Heart right ventricle (tissue), 16 donors: ENCODE measurements at regions of chr22 and their contacts with region 1.

Region 1: GRCh38 chr22:33920927-33921524 is 750 bp upstream of the LARGE1 start:
- DNase-seq: peak; percentile 99
- ATAC-seq: peak; percentile 89 to 96 (median 94)
- H3K4me3 ChIP-seq: peak overlapping the region; percentile 49 to 87 (median 72)
- H3K27ac ChIP-seq: peak overlapping the region in 9 of 10 donors; percentile 63 to 91 (median 78)
- H3K4me1 ChIP-seq: peaks cover 0 to 56% (median 37%) of the 10 kb centered on the region in 9 donors
- H3K27me3 ChIP-seq: peaks cover 0 to 57% (median 0%) of the 10 kb centered on the region in 7 donors
- CTCF ChIP-seq: no peak

Region 2: DNA sequence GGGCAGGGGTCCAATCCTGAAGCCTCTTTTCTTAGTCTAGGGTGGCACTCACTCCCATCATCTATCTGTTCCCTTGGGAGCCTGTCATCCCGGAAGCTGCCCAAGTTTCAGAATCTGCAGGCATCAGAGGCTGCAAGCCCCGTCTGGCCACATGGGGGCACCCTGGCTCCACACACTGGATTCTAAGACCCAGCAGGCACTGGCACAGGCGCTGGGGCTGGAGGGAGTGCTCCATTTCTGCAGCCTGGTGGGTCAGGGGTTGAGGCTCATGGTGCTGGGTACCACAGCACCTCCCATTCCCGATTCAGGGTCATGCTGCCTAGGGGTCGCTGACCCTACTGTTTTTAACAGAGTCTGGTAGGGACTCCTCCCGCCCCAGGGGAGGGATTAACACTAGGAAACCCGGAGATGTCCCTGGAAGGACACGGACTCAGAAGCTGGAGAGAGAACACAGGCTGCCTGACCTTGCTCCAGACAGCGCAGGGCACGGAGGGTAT is 618.9 kb before region 1 on chr22:
- intact Hi-C with region 1: loop called in 6 of 10 experiments (anchors 2 to 10 kb)
- DNase-seq: peak; percentile 82 to 85
- ATAC-seq: peak; percentile 86 to 92 (median 90)
- H3K4me3 ChIP-seq: peak overlapping the region in 2 of 10 donors; percentile 3 to 16
- H3K27ac ChIP-seq: peak overlapping the region in 7 of 10 donors; percentile 6 to 72 (median 57)
- H3K4me1 ChIP-seq: peaks cover 5 to 35% (median 16%) of the 10 kb centered on the region in 9 donors
- H3K27me3 ChIP-seq: no peaks in the 10 kb centered on the region
- CTCF ChIP-seq: peak; percentile 90 to 98 (median 96)

Region 3: GRCh38 chr22:33597274-33597985 is 323.6 kb before region 1 on chr22:
- intact Hi-C with region 1: loop called in 1 of 10 experiments (anchors 10 kb)
- DNase-seq: peak in 1 of 2 donors; percentile 12
- ATAC-seq: peak in 6 of 8 donors; percentile 47 to 75 (median 56)
- H3K4me3 ChIP-seq: no peak overlapping the region
- H3K27ac ChIP-seq: no peak overlapping the region
- H3K4me1 ChIP-seq: peaks cover 0 to 19% (median 5%) of the 10 kb centered on the region in 9 donors
- H3K27me3 ChIP-seq: no peaks in the 10 kb centered on the region
- CTCF ChIP-seq: no peak

Region 4: DNA sequence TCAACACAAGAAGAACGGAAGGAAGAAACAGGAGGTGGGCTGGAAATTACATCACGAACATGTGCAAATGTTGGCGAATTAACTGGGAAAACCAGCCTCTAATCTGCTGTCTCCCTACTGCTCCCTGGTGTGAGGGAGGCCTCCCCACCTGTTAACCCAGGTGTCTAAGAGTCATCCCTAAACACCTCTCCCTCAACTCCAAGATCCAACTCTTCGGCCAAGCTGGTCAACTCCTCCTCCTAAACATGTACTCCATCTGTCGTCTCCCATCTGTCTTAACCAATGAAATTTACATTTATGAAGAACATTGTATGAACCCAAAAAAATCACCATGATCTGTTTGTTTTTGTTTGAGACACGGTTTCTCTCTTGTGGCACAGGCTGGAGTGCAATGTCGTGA is 154.9 kb before region 1 on chr22:
- intact Hi-C with region 1: loop called in 5 of 10 experiments (anchors 10 kb)
- DNase-seq: no peak
- ATAC-seq: no peak
- H3K4me3 ChIP-seq: no peak overlapping the region
- H3K27ac ChIP-seq: no peak overlapping the region
- H3K4me1 ChIP-seq: peaks cover 0 to 24% (median 8%) of the 10 kb centered on the region in 9 donors
- H3K27me3 ChIP-seq: no peaks in the 10 kb centered on the region
- CTCF ChIP-seq: no peak

Region 5: DNA sequence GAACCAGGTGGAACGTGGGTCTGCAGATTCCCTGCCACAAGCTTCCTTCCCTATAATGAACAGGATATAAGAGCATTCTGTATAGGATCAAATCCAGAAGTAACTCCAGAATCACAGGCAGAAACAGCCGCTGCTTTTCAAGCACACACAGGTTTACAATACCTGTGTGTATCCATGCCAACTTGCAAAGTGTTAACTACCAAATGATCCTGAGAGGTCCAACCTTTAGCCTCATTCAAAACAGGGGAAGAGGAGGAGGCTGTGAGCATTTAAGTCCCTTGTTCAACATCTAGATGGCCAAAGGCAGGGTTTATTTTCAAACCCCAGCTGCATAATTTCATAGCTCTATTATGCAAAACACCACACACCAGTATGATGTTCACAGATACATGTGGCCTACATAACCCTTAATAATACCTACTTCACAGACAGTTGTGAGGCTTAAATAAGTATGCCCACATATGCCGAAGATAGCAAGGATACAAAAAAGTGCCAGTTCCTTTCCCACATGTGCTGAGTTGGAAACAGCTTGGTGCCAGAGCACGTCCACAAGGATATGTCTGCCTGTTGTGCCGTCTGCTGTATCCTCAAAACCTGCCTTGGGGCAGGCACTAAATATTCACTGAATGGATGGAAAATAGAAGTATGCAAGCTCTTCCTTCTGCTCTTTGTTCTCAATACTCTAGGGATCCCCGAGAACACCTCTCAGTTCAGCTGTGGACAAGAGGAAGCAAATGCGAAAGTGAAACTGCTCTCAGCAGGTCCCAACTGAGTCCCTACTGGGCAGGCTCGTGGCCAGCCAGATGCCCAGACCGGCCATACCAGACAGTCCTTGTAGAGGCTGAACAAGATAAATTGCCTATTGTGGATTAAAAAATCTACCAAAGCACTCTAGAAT is 67.6 kb before region 1 on chr22:
- intact Hi-C with region 1: loop called in 3 of 10 experiments (anchors 5 to 10 kb)
- DNase-seq: peak; percentile 63 to 68
- ATAC-seq: peak; percentile 83 to 96 (median 93)
- H3K4me3 ChIP-seq: peak overlapping the region in 9 of 10 donors; percentile 35 to 67 (median 54)
- H3K27ac ChIP-seq: peak overlapping the region in 9 of 10 donors; percentile 31 to 83 (median 69)
- H3K4me1 ChIP-seq: peaks cover 2 to 69% (median 45%) of the 10 kb centered on the region in 9 donors
- H3K27me3 ChIP-seq: no peaks in the 10 kb centered on the region
- CTCF ChIP-seq: no peak

Region 6: DNA sequence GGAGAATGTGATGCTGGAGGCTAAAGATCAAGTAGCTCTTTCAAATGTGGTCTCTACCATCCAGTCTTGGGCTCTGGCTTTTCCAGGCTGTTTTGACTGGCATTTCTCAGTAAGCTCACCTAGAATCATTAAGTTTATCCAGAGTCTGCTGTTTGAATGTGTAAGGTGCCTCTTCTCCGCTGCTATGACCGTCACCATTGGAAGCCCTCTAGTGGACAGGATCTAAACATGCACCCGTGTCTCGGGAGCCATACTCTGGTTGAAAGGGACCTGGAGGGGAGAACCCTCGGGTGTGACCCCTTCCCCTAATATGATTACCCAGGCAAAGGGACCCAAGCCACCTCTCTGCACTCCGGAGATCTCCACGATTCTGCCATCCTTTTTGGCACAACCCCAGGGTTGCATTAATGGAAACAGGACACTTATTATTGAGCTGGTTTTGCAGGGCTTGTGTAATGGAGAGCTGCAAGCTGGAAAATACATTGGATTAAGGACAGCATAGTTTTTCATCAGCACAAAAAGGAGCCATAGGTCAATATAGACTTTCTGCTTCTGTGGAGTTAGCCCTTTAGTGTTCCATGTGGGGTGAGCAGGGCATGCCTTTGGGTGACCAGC is 190.3 kb after region 1 on chr22:
- intact Hi-C with region 1: loop called in 8 of 10 experiments (anchors 2 to 10 kb)
- DNase-seq: peak in 1 of 2 donors; percentile 9
- ATAC-seq: peak in 6 of 8 donors; percentile 46 to 73 (median 61)
- H3K4me3 ChIP-seq: no peak overlapping the region
- H3K27ac ChIP-seq: no peak overlapping the region
- H3K4me1 ChIP-seq: no peaks in the 10 kb centered on the region
- H3K27me3 ChIP-seq: peaks cover 0 to 10% (median 5%) of the 10 kb centered on the region in 7 donors
- CTCF ChIP-seq: peak; percentile 34 to 76 (median 74)

Region 7: GRCh38 chr22:34150023-34150422 is 229.0 kb after region 1 on chr22:
- intact Hi-C with region 1: no loop called
- DNase-seq: no peak
- ATAC-seq: no peak
- H3K4me3 ChIP-seq: no peak overlapping the region
- H3K27ac ChIP-seq: no peak overlapping the region
- H3K4me1 ChIP-seq: no peaks in the 10 kb centered on the region
- H3K27me3 ChIP-seq: no peaks in the 10 kb centered on the region
- CTCF ChIP-seq: no peak